AG04449 (cell line): ENCODE measurements at regions of chr11 and their contacts with region 1.

Region 1: GRCh38 chr11:112113539-112114457 is 27.1 kb downstream of the SDHD start:
- DNase-seq: no peak
- H3K4me3 ChIP-seq: no peak overlapping the region
- CTCF ChIP-seq: peak; percentile 62

Region 2: GRCh38 chr11:112129656-112130055 is 15.9 kb after region 1 on chr11:
- CTCF ChIA-PET with region 1: interaction called, 46 read pairs
- POLR2A ChIA-PET with region 1: no interaction called
- DNase-seq: no peak
- H3K4me3 ChIP-seq: no peak overlapping the region
- CTCF ChIP-seq: no peak

Region 3: GRCh38 chr11:112174789-112175598 is 61.2 kb after region 1 on chr11 and contains the start of gene BCO2:
- CTCF ChIA-PET with region 1: interaction called, 54 read pairs
- POLR2A ChIA-PET with region 1: no interaction called
- DNase-seq: no peak
- H3K4me3 ChIP-seq: peak within 1 kb of the TSS; percentile 21
- CTCF ChIP-seq: peak; percentile 64

Region 4: DNA sequence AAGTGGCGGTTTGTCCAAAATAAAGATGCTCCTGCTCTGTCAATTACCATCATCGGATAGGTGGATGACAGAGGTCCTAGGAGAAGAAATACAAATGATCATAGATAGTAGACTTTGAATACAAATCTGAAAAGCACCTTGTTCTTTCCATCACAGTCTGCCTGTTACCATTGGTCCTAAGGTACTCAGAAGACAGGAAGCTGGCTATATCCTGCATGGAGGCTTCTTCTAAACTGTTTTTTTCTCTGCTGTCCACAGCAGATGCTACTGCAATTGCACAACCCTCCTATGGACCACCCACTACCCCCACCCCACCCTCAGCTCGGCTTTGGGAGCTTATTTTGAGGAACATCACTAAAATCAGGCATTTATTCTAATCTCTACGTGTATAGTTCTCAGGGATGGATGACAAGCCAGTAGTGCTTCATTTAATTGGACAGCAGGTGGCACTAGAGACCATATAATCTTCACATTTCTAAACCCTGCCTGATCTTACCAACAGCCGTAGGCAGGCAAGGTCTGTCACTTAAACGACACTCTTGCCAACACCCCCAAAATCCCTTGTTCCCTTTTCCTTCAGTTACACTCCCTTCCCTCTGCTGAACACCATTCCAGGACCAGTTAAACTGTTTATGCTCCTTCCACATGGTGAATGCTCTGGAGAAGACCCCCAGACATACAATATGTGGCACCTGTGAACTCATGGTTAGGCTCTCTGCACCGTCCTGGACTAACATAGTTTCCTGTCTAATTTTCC is 105.9 kb after region 1 on chr11:
- CTCF ChIA-PET with region 1: interaction called, 75 read pairs
- POLR2A ChIA-PET with region 1: no interaction called
- DNase-seq: no peak
- H3K4me3 ChIP-seq: no peak overlapping the region
- CTCF ChIP-seq: peak; percentile 50

Region 5: GRCh38 chr11:112280268-112281126 is 166.7 kb after region 1 on chr11:
- CTCF ChIA-PET with region 1: interaction called, 125 read pairs
- POLR2A ChIA-PET with region 1: no interaction called
- DNase-seq: no peak
- H3K4me3 ChIP-seq: peak overlapping the region; percentile 57
- CTCF ChIP-seq: peak; percentile 84